ENCODE measurements at regions of chr4 and their contacts with region 1.

Region 1: DNA sequence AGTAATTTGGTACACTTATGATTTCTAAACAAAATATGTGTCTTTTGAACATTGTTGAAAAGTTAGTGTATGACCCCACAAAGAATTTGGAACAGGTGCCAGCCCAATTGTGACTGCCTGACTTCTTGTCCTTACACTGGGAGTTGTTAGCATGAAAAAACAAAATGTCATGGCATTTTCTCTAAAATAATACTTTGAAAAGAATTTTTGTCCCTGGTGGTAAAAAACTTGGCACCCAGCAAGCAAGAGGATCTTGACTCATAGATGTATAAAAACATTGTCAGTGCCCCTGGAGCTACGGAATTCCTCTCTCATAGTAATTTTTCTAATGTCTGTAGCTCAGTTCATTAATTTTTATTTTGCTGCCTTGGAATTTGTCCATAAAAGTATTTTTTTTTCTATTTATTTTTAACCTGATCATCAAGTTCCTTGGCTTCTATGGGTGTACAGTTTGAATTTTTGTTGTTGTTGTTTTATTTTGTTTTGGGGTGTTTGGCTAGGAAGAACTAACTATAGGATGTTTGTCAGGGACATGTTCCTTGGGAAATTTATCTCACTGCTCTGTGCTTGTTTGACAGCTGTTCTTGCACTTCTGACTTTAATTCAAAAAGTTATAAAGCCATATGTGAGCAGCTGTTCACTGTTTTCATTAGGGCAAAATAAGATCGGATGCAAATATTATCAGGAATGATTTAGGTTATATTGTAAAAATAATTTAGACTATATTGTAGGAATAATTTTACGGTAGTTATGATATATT is 95.4 kb upstream of the NUDT6 start:
- DNase-seq: no peak
- ATAC-seq: no peak
- H3K4me3 ChIP-seq: no peak overlapping the region
- H3K4me3 Mint-ChIP-seq: no peak overlapping the region
- H3K27ac ChIP-seq: no peak overlapping the region
- H3K27ac Mint-ChIP-seq: no peak overlapping the region
- H3K4me1 ChIP-seq: no peaks in the 10 kb centered on the region
- H3K4me1 Mint-ChIP-seq: no peaks in the 10 kb centered on the region
- H3K27me3 ChIP-seq: no peaks in the 10 kb centered on the region
- H3K27me3 Mint-ChIP-seq: no peaks in the 10 kb centered on the region

Region 2: GRCh38 chr4:123217664-123218063 is 199.8 kb after region 1 on chr4:
- CTCF ChIA-PET with region 1: interaction called in 1 of 2 experiments, 10 read pairs
- POLR2A ChIA-PET with region 1: no interaction called
- DNase-seq: no peak
- ATAC-seq: no peak
- H3K4me3 ChIP-seq: no peak overlapping the region
- H3K4me3 Mint-ChIP-seq: no peak overlapping the region
- H3K27ac ChIP-seq: no peak overlapping the region
- H3K27ac Mint-ChIP-seq: no peak overlapping the region
- H3K4me1 ChIP-seq: no peaks in the 10 kb centered on the region
- H3K4me1 Mint-ChIP-seq: no peaks in the 10 kb centered on the region
- H3K27me3 ChIP-seq: no peaks in the 10 kb centered on the region
- H3K27me3 Mint-ChIP-seq: no peaks in the 10 kb centered on the region

Measured in T-cell (primary cell).